ENCODE measurements at regions of chr19 and their contacts with region 1.

Region 1: GRCh38 chr19:35090506-35091237 is 25.0 kb upstream of the FXYD3 start:
- DNase-seq: peak in 7 of 9 donors; percentile 13 to 43 (median 30)
- ATAC-seq: peak; percentile 80
- H3K4me3 ChIP-seq: no peak overlapping the region
- H3K4me3 Mint-ChIP-seq: peak overlapping the region in 4 of 10 donors; percentile 23 to 56 (median 30)
- H3K27ac ChIP-seq: no peak overlapping the region
- H3K27ac Mint-ChIP-seq: no peak overlapping the region
- H3K4me1 ChIP-seq: peaks cover 7 to 16% of the 10 kb centered on the region in 2 donors
- H3K4me1 Mint-ChIP-seq: peaks cover 0 to 10% (median 4%) of the 10 kb centered on the region in 7 donors
- H3K27me3 ChIP-seq: no peaks in the 10 kb centered on the region
- H3K27me3 Mint-ChIP-seq: peaks cover 0 to 10% (median 3%) of the 10 kb centered on the region in 5 donors

Region 2: GRCh38 chr19:34838753-34839431 is 251.8 kb before region 1 on chr19:
- CTCF ChIA-PET with region 1: no interaction called
- POLR2A ChIA-PET with region 1: no interaction called
- intact Hi-C with region 1: loop called in 1 of 2 experiments (anchors 2 kb)
- DNase-seq: peak in 5 of 9 donors; percentile 18 to 44 (median 37)
- ATAC-seq: peak; percentile 55
- H3K4me3 ChIP-seq: no peak overlapping the region
- H3K4me3 Mint-ChIP-seq: peak overlapping the region; percentile 5 to 78 (median 66)
- H3K27ac ChIP-seq: peak overlapping the region; percentile 17
- H3K27ac Mint-ChIP-seq: peak overlapping the region in 7 of 9 donors; percentile 13 to 82 (median 53)
- H3K4me1 ChIP-seq: no peaks in the 10 kb centered on the region
- H3K4me1 Mint-ChIP-seq: peaks cover 6 to 33% (median 23%) of the 10 kb centered on the region in 7 donors
- H3K27me3 ChIP-seq: peaks cover 0 to 3% of the 10 kb centered on the region in 2 donors
- H3K27me3 Mint-ChIP-seq: peaks cover 0 to 17% (median 0%) of the 10 kb centered on the region in 5 donors

Region 3: GRCh38 chr19:34867631-34868030 is 223.0 kb before region 1 on chr19:
- CTCF ChIA-PET with region 1: no interaction called
- POLR2A ChIA-PET with region 1: no interaction called
- intact Hi-C with region 1: no loop called
- DNase-seq: no peak
- ATAC-seq: no peak
- H3K4me3 ChIP-seq: no peak overlapping the region
- H3K4me3 Mint-ChIP-seq: no peak overlapping the region
- H3K27ac ChIP-seq: no peak overlapping the region
- H3K27ac Mint-ChIP-seq: no peak overlapping the region
- H3K4me1 ChIP-seq: no peaks in the 10 kb centered on the region
- H3K4me1 Mint-ChIP-seq: peaks cover 0 to 1% (median 0%) of the 10 kb centered on the region in 7 donors
- H3K27me3 ChIP-seq: no peaks in the 10 kb centered on the region
- H3K27me3 Mint-ChIP-seq: no peaks in the 10 kb centered on the region

Measured in naive thymus-derived CD4-positive, alpha-beta T cell (primary cell).